Dorsolateral prefrontal cortex (tissue), 120 donors: ENCODE measurements at regions of chr6 and their contacts with region 1.

Region 1: GRCh38 chr6:112745765-112746164 is 398.6 kb downstream of the RFPL4B start:
- DNase-seq: no peak
- H3K4me3 ChIP-seq: no peak overlapping the region
- H3K27ac ChIP-seq: no peak overlapping the region
- H3K27me3 ChIP-seq: no peaks in the 10 kb centered on the region
- CTCF ChIP-seq: no peak

Region 2: GRCh38 chr6:112725541-112726085 is 20.2 kb before region 1 on chr6:
- intact Hi-C with region 1: loop called in 1 of 2 experiments (anchors 2 kb)
- DNase-seq: no peak
- H3K4me3 ChIP-seq: no peak overlapping the region
- H3K27ac ChIP-seq: no peak overlapping the region
- H3K27me3 ChIP-seq: no peaks in the 10 kb centered on the region
- CTCF ChIP-seq: no peak

Region 3: DNA sequence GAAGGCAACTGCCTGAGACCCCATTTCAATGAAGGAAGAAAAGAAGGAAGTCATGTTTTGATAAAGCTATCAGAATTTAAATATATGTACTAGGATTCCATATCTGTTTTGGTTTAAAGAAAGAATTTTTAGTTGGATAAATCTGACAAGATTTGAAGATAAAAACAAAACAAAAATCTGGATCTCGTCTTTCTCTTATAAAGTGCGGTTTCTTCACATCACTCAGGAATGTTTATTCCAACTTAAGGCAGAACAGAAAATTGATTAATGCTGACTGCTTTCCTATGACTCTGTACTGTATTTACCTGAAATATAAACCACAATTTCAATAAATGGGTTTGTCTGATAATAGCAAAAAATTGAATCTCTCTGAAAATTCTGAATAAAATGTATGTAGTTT is 41.0 kb after region 1 on chr6:
- intact Hi-C with region 1: no loop called
- DNase-seq: no peak
- H3K4me3 ChIP-seq: no peak overlapping the region
- H3K27ac ChIP-seq: no peak overlapping the region
- H3K27me3 ChIP-seq: no peaks in the 10 kb centered on the region
- CTCF ChIP-seq: no peak

Region 4: DNA sequence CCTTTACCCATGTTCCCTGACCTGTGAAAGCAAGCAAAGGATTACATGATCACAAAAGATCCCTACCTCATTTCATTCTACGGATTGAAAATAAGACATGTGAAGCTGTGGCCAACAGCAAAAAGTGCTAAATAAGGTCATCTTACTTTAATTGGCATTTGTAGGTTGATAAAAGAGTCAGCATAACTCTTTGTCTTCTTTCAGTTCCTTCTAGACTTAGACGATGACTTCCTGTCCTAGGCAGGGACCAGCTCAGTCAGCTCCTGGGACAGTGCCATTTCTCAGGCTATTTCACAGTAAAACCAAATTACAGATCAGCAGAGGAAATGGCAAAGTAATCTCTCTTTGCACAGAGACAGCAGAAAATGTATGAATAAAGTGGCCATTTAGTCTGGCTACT is 82.0 kb after region 1 on chr6:
- intact Hi-C with region 1: no loop called
- DNase-seq: peak in 2 of 10 donors; percentile 11 to 35
- H3K4me3 ChIP-seq: no peak overlapping the region
- H3K27ac ChIP-seq: peak overlapping the region in 2 of 59 donors; percentile 34 to 57
- H3K27me3 ChIP-seq: no peaks in the 10 kb centered on the region
- CTCF ChIP-seq: no peak

Region 5: DNA sequence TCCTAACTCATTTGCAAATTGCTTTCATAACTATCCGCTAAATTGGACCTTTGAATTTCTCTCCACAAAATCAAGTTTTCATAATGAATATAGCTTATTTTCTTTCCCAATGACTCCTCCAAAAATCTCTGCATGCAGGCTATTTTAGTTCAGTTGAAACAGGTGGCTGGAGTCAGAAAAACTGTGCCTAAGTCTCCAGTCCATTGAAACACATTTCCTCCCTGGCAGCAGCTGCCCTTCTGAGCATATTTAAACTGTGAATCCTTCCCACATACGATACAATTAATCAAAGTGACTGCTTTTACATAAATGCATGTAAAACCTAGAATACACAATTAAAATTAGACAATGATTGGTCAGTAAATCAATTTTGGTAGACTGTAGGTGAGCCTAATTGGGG is 766.8 kb after region 1 on chr6:
- intact Hi-C with region 1: no loop called
- DNase-seq: no peak
- H3K4me3 ChIP-seq: no peak overlapping the region
- H3K27ac ChIP-seq: no peak overlapping the region
- H3K27me3 ChIP-seq: peaks cover 0 to 5% (median 0%) of the 10 kb centered on the region in 45 donors
- CTCF ChIP-seq: no peak